ENCODE measurements at regions of chr1 and their contacts with region 1.

Region 1: DNA sequence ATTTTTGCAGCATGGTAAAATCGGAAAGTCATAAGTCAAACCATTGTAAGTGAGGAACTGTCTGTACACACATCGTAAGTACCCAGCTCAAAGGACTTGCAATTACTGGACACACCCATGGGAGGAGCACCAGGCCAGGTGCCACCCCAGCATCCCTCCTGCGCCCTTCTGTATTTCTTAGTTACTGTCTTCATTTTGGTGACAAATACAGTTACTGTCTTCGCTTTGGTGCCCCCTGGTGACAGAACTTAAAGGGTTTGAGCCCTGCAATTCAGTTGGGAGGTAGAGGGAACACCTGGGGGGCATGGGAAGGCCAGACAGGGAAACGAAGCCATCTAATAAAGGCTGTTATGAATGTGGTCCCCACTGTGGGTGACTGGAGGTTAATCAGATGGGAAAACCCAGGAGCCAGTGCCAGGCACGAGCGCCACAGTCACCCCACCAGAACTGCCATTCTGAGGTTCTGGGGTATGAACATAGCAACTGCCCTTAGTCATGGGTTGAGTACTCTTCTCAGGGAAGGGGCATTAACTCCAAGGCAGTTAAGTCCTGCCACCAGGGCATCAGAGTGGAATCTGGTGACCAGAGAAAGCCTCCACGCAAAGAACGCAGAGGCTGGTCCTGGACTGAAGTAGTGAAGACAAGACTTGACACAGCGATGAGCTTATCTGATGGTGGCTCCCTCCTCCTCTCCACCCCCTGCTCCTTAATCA is 612.9 kb downstream of the PTPRU start:
- DNase-seq: peak; percentile 76
- ATAC-seq: peak; percentile 92
- H3K4me3 Mint-ChIP-seq: no peak overlapping the region
- H3K27ac Mint-ChIP-seq: no peak overlapping the region
- H3K4me1 Mint-ChIP-seq: no peaks in the 10 kb centered on the region
- H3K27me3 Mint-ChIP-seq: no peaks in the 10 kb centered on the region
- CTCF ChIP-seq: peak; percentile 45; the same call in 1 of the 2 replicates

Region 2: DNA sequence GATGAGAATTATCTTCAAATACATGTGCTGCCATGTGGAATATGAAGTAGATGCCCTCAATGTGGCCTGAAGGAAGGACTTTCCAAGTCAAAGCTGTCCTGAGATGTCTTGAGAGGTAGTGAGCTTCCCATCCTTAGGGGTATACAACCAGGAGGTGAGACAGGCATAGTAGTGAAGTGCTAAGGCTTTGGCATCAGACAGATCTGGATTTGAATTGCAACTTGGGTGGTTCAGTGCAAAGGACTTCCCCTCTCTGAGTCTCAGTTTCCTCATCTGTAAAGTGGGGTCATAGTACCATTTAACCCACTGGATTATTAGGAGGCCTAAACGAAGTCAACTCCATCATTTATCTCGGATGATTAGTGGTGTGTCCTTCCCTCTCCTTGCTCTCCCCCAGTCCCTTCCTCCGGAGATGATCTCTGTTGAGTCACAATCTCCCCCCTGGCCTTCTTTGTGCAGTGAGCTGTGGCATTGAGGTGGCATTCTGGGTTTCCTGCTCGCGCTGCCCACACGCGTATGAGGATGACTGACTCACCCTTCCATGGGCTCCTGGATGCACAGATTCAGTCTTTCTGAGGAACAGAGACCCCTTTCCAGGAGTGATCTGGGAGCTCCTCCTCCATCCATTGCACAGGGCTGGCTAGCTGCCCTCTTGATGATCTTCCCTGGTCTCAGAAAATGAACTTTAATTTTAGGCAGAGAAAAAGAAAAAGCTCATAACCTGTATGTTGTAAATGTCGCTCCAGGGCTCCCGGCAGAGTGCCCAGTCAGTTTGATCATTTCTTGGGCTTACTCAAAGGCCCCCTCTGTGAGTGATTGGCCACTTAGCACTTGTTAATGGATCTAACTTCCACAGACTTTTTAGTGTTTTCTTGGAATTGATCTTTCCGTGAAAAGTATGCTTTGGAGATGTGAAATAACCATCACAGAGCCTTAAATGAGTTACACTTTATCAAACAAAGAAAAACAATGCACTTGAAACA is 258.3 kb before region 1 on chr1:
- CTCF ChIA-PET with region 1: no interaction called
- POLR2A ChIA-PET with region 1: no interaction called
- DNase-seq: no peak
- ATAC-seq: no peak
- H3K4me3 Mint-ChIP-seq: no peak overlapping the region
- H3K27ac Mint-ChIP-seq: no peak overlapping the region
- H3K4me1 Mint-ChIP-seq: peaks cover 4% of the 10 kb centered on the region; the same call in 1 of the 2 replicates
- H3K27me3 Mint-ChIP-seq: no peaks in the 10 kb centered on the region
- CTCF ChIP-seq: no peak

Region 3: GRCh38 chr1:29784276-29785136 is 64.7 kb before region 1 on chr1:
- CTCF ChIA-PET with region 1: no interaction called
- POLR2A ChIA-PET with region 1: no interaction called
- DNase-seq: no peak
- ATAC-seq: no peak
- H3K4me3 Mint-ChIP-seq: no peak overlapping the region
- H3K27ac Mint-ChIP-seq: no peak overlapping the region
- H3K4me1 Mint-ChIP-seq: no peaks in the 10 kb centered on the region
- H3K27me3 Mint-ChIP-seq: no peaks in the 10 kb centered on the region
- CTCF ChIP-seq: no peak

Region 4: DNA sequence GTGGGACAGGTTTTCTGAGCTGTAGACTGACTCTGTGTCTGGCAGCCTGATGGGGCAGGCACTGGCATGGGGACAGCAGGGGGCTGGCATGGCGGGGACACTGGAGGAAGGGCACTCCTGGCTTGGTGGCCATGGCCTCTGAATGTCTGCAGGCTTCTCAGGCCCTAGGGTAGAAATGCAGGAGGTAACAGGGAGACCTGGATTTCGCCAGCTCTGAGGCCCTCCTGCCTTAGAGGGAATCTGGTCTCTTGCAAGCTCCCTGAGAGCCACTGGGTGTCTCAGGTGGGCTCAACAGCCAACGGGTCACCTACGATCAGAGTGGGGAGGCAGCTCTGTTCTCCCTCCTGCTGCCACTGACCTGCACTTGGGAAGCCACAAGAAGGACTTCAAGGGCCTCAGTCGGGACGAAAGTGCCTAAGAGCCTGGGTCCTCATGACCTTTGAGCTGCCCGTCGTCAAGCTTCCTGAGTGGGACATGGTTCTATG is 44.0 kb before region 1 on chr1:
- CTCF ChIA-PET with region 1: interaction called, 10 read pairs
- POLR2A ChIA-PET with region 1: no interaction called
- DNase-seq: no peak
- ATAC-seq: peak; percentile 34; the same call in 1 of the 2 replicates
- H3K4me3 Mint-ChIP-seq: no peak overlapping the region
- H3K27ac Mint-ChIP-seq: no peak overlapping the region
- H3K4me1 Mint-ChIP-seq: peaks cover 3% of the 10 kb centered on the region; the same call in 1 of the 2 replicates
- H3K27me3 Mint-ChIP-seq: no peaks in the 10 kb centered on the region
- CTCF ChIP-seq: no peak

Region 5: DNA sequence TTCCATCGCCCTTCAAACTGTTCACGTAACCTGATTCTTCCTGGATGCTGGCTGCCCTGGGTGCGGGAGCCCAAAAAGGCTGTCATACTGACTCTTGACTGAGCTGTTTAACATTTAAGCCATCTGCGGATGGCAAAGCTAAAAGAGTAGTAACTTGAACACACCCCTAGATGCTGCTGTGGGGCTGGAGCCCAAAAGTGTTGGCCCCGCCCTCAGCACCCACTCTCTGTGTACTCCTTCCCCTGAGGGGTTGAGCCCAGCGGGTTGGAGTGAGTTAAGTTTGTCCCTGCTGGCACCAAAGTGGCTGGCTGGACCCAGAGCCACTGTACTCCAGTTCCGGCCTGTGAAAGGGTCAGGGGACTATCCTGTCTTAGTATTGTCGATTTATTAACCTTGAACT is 27.7 kb after region 1 on chr1:
- CTCF ChIA-PET with region 1: interaction called, 12 read pairs
- POLR2A ChIA-PET with region 1: no interaction called
- DNase-seq: peak; percentile 56
- ATAC-seq: peak; percentile 97
- H3K4me3 Mint-ChIP-seq: no peak overlapping the region
- H3K27ac Mint-ChIP-seq: 0 out of 2 replicates have a peak overlapping the region, but pooled peaks have one; percentile 50
- H3K4me1 Mint-ChIP-seq: peaks cover 23% of the 10 kb centered on the region
- H3K27me3 Mint-ChIP-seq: no peaks in the 10 kb centered on the region
- CTCF ChIP-seq: no peak

Region 6: DNA sequence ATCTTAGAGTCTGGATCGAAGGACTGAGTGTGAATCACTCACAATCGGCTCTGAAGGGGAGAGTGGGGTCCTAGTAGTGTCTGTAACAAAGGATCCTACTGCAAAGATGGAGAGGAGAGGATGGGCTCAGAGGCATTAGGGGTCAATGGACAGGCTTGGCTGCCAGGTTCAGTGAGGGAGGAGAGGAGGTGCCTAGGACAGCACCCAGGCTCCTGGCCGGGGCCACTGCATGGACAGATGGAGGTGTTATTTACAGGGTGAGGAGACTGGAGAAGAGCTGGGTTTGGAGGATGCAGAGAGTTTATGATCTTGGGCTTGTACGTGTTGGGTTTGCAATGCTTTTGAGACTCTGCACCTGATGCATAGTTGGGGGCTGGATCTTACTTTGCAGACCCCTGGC is 46.0 kb after region 1 on chr1:
- CTCF ChIA-PET with region 1: no interaction called
- POLR2A ChIA-PET with region 1: no interaction called
- DNase-seq: no peak
- ATAC-seq: no peak
- H3K4me3 Mint-ChIP-seq: no peak overlapping the region
- H3K27ac Mint-ChIP-seq: no peak overlapping the region
- H3K4me1 Mint-ChIP-seq: peaks cover 17% of the 10 kb centered on the region; the same call in 1 of the 2 replicates
- H3K27me3 Mint-ChIP-seq: no peaks in the 10 kb centered on the region
- CTCF ChIP-seq: no peak

Region 7: DNA sequence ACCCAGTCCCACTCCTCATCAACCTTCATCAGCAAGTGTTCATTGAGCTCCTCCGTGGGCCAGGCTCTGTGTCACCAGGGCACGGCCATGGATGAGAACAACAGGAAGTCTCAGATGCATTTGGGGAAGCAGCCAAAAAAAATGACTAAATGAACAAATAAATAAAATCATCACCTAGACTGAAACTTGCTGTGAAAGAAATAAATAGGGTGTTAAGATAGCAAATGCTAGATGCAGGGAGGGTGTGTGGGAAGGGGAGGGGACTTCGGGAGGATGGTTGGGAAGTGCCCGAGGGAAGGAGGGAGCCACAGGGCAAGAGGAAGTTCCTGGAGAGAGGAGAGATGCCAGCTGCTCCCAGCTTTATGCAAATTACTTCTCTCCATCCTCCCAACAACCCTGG is 83.9 kb after region 1 on chr1:
- CTCF ChIA-PET with region 1: no interaction called
- POLR2A ChIA-PET with region 1: no interaction called
- DNase-seq: no peak
- ATAC-seq: no peak; the same call in 1 of the 2 replicates
- H3K4me3 Mint-ChIP-seq: no peak overlapping the region
- H3K27ac Mint-ChIP-seq: no peak overlapping the region
- H3K4me1 Mint-ChIP-seq: peaks cover 51% of the 10 kb centered on the region
- H3K27me3 Mint-ChIP-seq: no peaks in the 10 kb centered on the region; the same call in 1 of the 2 replicates
- CTCF ChIP-seq: no peak

Region 8: GRCh38 chr1:30085811-30086770 is 236.9 kb after region 1 on chr1:
- CTCF ChIA-PET with region 1: interaction called, 16 read pairs
- POLR2A ChIA-PET with region 1: no interaction called
- DNase-seq: peak; percentile 94
- ATAC-seq: peak; percentile 74
- H3K4me3 Mint-ChIP-seq: peak overlapping the region; percentile 61
- H3K27ac Mint-ChIP-seq: no peak overlapping the region
- H3K4me1 Mint-ChIP-seq: peaks cover 15% of the 10 kb centered on the region
- H3K27me3 Mint-ChIP-seq: peaks cover 3% of the 10 kb centered on the region
- CTCF ChIP-seq: peak; percentile 80